ENCODE measurements at regions of chr16 and their contacts with region 1.

Region 1: DNA sequence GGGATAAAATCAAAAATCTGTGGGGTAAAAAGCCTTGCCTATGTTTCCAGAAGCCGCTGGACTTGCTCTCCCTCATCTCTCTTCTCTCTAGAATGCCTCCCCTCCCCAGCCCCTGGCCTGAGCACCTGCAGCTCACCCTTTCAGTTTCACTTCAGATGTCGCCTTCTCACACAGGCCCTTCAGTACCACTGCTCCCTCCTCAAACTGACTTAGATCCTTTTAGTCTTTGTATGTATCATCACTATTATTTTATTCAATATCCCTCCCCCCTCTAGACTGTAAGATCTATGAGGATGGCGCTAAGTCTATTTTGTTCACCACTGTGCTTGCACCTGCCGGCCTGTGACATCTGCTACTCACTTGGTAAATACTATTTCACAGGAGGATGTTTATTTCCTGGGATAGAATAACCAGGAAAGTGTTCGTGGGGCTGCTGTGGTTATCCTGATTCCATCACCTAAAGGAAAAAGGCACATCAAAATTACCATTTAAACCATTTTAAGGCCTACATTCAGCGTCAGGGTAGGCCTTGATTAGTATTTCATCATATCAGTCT is 122.3 kb downstream of the MRTFB start:
- DNase-seq: peak; percentile 64
- H3K4me3 Mint-ChIP-seq: peak overlapping the region; percentile 61
- H3K27ac Mint-ChIP-seq: peak overlapping the region; percentile 80
- H3K4me1 Mint-ChIP-seq: peaks cover 46% of the 10 kb centered on the region
- H3K27me3 Mint-ChIP-seq: no peaks in the 10 kb centered on the region

Region 2: DNA sequence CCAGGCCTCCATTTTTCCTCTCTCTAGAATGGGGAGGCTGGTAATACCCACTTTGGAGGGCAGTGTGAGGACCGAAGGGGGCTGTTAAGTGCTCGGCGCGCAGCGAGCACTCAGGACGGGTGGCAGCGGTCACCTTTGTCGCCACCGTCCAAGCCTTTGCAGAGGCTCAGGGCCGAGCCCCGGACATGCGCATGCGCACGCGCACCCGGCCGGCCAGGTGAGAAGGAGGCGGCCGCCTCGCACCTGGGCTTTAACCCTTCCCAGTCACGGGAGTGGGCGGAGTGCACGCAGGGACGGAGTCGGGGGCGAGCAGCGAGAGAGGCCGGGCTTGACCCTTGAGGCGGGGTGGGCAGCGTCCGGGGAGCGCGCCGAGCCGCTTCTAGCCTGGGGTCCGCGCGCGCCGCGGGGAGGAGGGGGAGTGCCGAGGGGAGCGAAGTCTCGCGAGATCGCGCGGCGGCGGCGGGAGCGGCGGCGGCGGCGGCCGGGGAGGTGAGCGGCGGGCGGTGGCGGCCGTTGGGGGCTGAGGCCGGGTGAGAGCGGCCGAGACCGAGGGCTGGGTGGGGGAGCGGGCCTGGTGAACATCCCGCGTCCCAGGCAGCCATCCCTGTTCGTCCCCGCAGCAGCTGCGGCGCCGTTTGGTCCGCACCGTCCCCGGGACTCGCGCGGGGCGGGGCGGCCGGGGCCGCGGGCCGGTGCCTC is 122.4 kb before region 1 on chr16 and contains the start of gene MRTFB:
- CTCF ChIA-PET with region 1: no interaction called
- intact Hi-C with region 1: loop called (anchors 5 kb)
- DNase-seq: peak; percentile 76
- H3K4me3 Mint-ChIP-seq: peak within 1 kb of the TSS; percentile 86
- H3K27ac Mint-ChIP-seq: peak within 1 kb of the TSS; percentile 59
- H3K4me1 Mint-ChIP-seq: peaks cover 11% of the 10 kb centered on the region
- H3K27me3 Mint-ChIP-seq: no peaks in the 10 kb centered on the region
- total RNA-seq, gene MRTFB: 8.2 to 8.4 TPM

Region 3: DNA sequence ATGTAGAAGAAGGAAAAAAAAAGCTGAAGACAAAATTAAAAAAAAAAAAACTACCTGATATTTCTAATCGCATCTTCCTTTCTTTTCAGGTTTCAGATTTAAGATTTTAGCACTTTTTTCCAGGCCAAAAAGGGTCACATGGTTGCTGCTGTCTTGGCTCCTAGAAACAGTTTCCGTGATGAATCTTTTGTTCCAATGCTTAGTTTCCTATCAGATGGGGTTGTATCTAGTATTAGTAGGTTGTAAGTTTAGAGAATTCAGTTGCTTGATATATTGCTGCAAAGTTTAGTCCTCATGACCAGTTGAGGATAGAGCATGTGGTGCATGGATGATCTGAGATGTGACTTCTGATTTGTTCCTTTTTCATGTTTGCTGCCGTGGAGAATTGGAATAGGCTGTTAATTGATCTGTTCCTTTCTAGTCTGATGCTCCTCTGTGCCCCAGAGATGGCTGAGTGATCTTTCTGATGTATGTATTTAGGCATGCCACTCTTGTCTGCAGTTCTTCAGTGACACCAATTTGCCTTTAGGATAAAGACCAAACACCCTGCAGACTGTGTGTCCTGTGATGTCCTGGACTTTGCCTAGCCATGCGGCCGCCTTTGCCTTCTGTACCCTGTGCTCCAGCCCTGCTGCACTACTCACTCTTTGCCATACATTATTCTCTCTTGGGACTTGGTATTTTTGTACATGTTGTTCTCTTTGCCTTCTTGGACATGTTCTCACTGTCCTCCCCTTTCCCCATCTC is 28.3 kb before region 1 on chr16:
- CTCF ChIA-PET with region 1: interaction called, 3 read pairs
- intact Hi-C with region 1: loop called (anchors 2 kb)
- DNase-seq: no peak
- H3K4me3 Mint-ChIP-seq: no peak overlapping the region
- H3K27ac Mint-ChIP-seq: no peak overlapping the region
- H3K4me1 Mint-ChIP-seq: peaks cover 20% of the 10 kb centered on the region
- H3K27me3 Mint-ChIP-seq: no peaks in the 10 kb centered on the region